ENCODE measurements at regions of chr3 and their contacts with region 1.

Region 1: DNA sequence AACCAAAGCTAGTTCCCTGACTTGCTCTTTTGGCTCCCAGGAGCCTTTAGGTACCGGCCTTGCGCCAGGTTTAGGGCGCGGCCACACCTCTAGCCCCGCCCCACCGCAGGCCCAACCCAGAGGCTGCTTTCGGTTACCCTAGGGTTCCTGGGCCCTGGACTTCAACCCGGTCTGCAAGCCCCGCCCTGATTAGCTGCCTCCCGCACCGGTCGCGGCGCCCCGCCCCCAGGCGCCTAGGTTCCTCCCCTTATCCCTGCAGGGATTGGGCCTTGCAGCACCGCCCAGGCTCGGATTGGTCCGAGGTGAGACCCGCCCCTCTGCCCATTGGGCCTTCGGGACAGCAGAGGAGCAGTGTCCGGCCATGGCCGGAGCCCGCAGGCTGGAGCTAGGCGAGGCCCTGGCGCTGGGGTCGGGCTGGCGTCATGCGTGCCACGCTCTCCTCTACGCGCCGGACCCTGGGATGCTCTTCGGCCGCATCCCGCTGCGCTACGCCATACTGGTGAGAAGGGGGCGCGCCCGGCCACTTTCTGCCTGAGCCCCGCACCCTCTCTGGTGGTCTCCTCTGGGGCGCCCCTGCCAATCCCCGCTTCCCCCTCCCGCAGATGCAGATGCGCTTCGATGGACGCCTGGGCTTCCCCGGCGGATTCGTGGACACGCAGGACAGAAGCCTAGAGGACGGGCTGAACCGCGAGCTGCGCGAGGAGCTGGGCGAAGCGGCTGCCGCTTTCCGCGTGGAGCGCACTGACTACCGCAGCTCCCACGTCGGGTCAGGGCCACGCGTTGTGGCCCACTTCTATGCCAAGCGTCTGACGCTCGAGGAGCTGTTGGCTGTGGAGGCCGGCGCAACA is at the start of gene NUDT16:
- DNase-seq: peak; percentile 99 to 100 (median 100)
- ATAC-seq: peak; percentile 95
- H3K4me3 ChIP-seq: peak within 1 kb of the TSS; percentile 65
- H3K4me1 ChIP-seq: peaks cover 25% of the 10 kb centered on the region
- CTCF ChIP-seq: no peak
- total RNA-seq, gene NUDT16: 31.7 to 45.9 (median 39.9) TPM

Region 2: DNA sequence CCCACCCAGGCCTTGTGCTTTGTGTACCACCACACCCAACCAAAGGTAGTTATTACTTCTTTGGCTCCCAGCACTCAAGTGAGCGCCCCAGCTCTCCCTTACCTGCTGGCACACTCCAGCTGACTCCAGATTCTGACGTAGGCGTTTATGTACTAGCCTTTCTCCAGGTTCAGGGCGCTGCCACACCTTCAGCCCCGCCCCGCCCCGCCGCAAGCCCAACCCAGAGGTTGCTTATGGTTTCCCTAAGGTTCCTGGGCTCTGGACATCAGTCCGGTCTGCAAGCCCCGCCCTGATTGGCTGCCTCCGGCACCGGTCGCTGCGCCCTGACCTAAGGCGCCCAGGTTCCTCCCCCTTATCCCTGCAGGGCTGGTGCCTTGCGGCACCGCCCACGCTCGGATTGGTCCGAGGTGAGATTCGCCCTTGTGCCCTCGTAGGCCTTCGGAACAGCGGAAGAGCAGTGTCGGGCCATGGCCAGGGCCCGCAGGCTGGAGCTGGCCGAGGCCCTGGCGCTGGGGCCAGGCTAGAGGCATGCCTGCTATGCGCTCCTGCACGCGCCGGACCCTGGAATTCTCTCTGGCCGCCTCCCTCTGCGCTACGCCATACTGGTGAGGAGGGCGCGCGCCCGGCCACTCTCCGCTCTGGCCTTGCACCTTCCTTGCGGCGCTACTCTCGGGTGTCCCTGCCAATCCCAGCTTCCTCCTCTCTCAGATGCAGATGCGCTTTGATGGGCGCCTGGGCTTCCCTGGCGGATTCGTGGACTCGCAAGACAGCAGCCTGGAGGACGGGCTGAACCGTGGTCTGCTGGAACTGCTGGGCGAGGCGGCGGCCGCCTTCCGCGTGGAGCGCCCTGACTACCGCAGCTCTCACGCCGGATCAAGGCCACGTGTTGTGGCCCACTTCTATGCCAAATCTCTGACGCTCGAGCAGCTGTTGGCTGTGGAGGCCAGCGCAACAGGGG is 19.9 kb before region 1 on chr3:
- intact Hi-C with region 1: no loop called
- DNase-seq: peak; percentile 94 to 98 (median 96)
- ATAC-seq: peak; percentile 95
- H3K4me3 ChIP-seq: peak overlapping the region; percentile 25
- H3K4me1 ChIP-seq: peaks cover 4% of the 10 kb centered on the region
- CTCF ChIP-seq: no peak

Region 3: GRCh38 chr3:131502530-131503245 is 121.0 kb after region 1 on chr3 and contains the start of gene MRPL3:
- intact Hi-C with region 1: loop called in 1 of 2 experiments (anchors 10 kb)
- DNase-seq: peak; percentile 88 to 91 (median 91)
- ATAC-seq: peak; percentile 98
- H3K4me3 ChIP-seq: peak within 1 kb of the TSS; percentile 79
- H3K4me1 ChIP-seq: peaks cover 15% of the 10 kb centered on the region
- CTCF ChIP-seq: no peak
- total RNA-seq, gene MRPL3: 48.6 to 68.8 (median 49.2) TPM